Sciatic nerve (tissue), 2 donors: ENCODE measurements at regions of chr1 and their contacts with region 1.

Region 1: GRCh38 chr1:43763497-43763973 is 56.2 kb downstream of the ST3GAL3 start:
- DNase-seq: peak; percentile 76
- ATAC-seq: peak; percentile 98

Region 2: GRCh38 chr1:43934101-43934985 is 170.8 kb after region 1 on chr1:
- intact Hi-C with region 1: loop called (anchors 5 kb)
- DNase-seq: peak; percentile 70
- ATAC-seq: peak; percentile 69

Region 3: GRCh38 chr1:44029906-44030604 is 266.5 kb after region 1 on chr1:
- intact Hi-C with region 1: loop called (anchors 5 kb)
- DNase-seq: peak; percentile 93
- ATAC-seq: peak; percentile 85

Region 4: GRCh38 chr1:44924835-44925513 is 1161.4 kb after region 1 on chr1:
- intact Hi-C with region 1: no loop called
- DNase-seq: no peak
- ATAC-seq: no peak